ENCODE measurements at regions of chr4 and their contacts with region 1.

Region 1: GRCh38 chr4:48779998-48780742 is at the start of gene FRYL:
- DNase-seq: peak; percentile 100
- H3K4me3 ChIP-seq: peak within 1 kb of the TSS; percentile 69 to 99
- H3K27ac ChIP-seq: peak within 1 kb of the TSS; percentile 86 to 96
- H3K4me1 ChIP-seq: peaks cover 0 to 37% (median 15%) of the 10 kb centered on the region in 4 donors
- H3K27me3 ChIP-seq: no peaks in the 10 kb centered on the region
- CTCF ChIP-seq: no peak

Region 2: DNA sequence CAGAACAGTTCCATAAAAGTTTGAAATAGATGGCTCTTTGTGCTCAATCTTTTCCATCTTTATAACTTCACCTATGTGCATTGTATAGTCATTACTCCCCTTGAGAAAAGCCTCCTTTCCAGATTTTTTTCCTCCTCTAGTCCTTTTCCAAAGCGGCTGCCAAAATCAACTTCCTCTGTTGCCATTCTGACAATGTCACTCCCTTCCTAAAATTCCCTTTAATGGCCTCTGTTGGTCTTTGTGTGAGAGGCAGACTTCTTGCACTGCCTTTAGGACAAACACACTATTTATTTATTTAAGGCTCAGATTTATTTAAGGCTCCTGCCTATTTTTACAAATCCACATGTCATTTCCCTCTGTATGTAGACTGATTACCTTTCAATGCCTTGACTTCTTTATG is 21.6 kb after region 1 on chr4:
- intact Hi-C with region 1: loop called (anchors 1 kb)
- DNase-seq: no peak
- H3K4me3 ChIP-seq: no peak overlapping the region
- H3K27ac ChIP-seq: peak overlapping the region; percentile 74
- H3K4me1 ChIP-seq: peaks cover 0 to 86% (median 39%) of the 10 kb centered on the region in 4 donors
- H3K27me3 ChIP-seq: no peaks in the 10 kb centered on the region
- CTCF ChIP-seq: no peak

Region 3: DNA sequence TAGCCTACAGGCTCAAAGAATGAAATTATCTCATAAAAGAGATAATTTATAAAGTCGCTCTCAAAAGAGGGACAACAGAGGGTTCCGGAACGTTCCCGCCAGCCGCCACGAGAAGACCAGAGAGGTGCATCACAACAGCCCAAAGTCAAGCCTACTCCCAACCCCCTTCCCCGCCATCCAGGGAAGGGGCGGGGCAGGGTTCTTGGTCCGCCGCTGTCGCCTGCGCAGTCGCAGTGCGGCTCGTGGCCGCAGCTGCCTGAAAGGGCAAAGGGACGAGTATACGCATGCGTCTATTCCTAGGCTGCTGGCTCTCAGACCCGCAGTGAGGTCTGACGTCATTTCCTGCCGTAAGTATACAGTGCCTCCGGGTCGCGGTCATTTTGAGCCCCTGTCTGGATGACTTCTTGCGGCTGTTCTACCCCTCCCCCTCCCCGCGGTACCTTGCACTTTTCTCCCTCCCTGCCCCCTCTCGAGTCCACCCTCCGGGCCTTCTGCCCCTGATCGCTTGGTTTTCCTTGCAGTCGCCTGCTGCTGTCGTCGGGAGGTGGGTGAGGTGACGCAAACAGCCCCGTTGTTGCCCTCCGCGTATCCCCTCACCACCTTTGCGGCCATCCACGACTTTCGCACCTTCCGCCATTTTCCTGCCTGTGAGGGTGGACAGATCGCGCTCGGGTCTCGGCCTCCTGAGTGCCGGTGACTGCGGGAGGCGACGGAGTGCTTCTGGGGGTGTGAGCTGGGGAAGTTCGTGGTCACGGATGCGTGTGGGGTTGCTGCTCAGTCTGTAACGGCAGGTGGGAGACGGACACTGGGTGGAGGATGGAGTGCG is 50.7 kb after region 1 on chr4 and contains the start of gene OCIAD1:
- intact Hi-C with region 1: loop called (anchors 5 kb)
- DNase-seq: peak; percentile 98
- H3K4me3 ChIP-seq: peak within 1 kb of the TSS; percentile 73 to 85
- H3K27ac ChIP-seq: peak within 1 kb of the TSS; percentile 88 to 89
- H3K4me1 ChIP-seq: peaks cover 0 to 18% (median 12%) of the 10 kb centered on the region in 4 donors
- H3K27me3 ChIP-seq: no peaks in the 10 kb centered on the region
- CTCF ChIP-seq: peak in 1 of 2 experiments; percentile 20

Region 4: DNA sequence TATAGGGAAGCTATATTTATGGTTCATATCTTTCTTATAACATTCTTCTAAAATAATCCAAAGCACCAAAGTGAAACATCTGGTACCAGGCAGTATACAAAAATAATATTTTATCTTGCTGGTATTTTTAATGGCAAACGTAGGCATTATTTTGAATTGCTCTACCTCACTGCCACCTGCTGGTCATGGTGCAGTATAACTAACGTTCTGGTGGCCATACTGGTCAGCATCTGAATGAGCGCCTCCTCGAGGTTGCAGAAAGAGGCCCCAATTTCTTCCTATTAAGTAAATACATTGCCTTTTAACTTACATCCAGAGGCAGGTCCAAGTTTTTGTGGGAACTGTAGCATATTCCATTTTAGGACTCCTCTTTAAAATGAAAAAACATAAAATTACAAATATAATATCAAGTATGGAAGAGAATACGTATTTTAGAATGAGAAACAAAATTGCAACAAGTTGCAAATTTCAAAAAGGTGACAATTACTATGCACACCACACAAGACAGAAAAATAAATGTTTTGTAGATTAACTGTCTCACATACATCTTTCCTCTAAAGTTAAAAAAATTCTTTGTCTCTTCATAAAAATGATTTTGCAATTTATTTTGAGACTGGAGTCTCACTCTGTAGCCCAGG is 183.0 kb after region 1 on chr4:
- intact Hi-C with region 1: loop called (anchors 10 kb)
- DNase-seq: peak; percentile 59 to 76
- H3K4me3 ChIP-seq: no peak overlapping the region
- H3K27ac ChIP-seq: no peak overlapping the region
- H3K4me1 ChIP-seq: no peaks in the 10 kb centered on the region
- H3K27me3 ChIP-seq: no peaks in the 10 kb centered on the region
- CTCF ChIP-seq: peak; percentile 92